MCF 10A (cell line): ENCODE measurements at regions of chr5 and their contacts with region 1.

Region 1: GRCh38 chr5:175534070-175534932 is 55.9 kb downstream of the SFXN1 start:
- DNase-seq: peak; percentile 83
- H3K4me3 Mint-ChIP-seq: no peak overlapping the region
- H3K27ac Mint-ChIP-seq: no peak overlapping the region
- H3K4me1 Mint-ChIP-seq: no peaks in the 10 kb centered on the region
- H3K27me3 Mint-ChIP-seq: no peaks in the 10 kb centered on the region
- CTCF ChIP-seq: peak; percentile 100

Region 2: DNA sequence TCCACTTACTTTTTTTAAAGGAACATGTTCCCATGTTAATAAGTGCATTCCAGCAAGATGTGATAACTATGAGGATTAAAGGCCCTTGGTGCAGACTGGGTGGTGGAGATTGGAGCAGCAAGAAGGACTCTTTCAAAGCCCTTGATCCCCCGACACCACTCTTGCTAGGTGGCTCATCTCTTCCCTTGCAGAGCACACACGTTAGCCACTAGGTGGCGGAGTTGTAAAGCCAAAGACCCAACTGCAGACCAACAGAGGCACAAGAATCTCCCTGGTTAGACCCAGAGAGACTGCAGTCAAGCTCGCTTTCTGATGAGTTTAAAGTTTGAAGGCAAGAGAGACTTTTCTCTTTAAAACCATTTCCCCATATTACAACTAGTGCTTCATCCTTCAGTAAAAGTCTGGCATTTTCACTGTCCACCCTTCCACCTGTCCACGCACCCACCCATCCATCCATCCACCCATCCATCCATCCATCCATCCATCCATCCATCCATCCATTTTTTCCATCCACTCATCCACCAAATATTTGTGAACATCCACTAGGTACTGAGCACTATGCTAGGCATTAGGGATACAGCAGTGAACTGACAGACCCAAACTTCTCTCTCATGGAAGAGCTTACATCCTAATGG is 583.0 kb before region 1 on chr5:
- CTCF ChIA-PET with region 1: interaction called, 4 read pairs
- POLR2A ChIA-PET with region 1: no interaction called
- intact Hi-C with region 1: loop called (anchors 2 kb)
- DNase-seq: peak; percentile 89
- H3K4me3 Mint-ChIP-seq: no peak overlapping the region
- H3K27ac Mint-ChIP-seq: no peak overlapping the region
- H3K4me1 Mint-ChIP-seq: no peaks in the 10 kb centered on the region
- H3K27me3 Mint-ChIP-seq: peaks cover 54% of the 10 kb centered on the region
- CTCF ChIP-seq: peak; percentile 93

Region 3: DNA sequence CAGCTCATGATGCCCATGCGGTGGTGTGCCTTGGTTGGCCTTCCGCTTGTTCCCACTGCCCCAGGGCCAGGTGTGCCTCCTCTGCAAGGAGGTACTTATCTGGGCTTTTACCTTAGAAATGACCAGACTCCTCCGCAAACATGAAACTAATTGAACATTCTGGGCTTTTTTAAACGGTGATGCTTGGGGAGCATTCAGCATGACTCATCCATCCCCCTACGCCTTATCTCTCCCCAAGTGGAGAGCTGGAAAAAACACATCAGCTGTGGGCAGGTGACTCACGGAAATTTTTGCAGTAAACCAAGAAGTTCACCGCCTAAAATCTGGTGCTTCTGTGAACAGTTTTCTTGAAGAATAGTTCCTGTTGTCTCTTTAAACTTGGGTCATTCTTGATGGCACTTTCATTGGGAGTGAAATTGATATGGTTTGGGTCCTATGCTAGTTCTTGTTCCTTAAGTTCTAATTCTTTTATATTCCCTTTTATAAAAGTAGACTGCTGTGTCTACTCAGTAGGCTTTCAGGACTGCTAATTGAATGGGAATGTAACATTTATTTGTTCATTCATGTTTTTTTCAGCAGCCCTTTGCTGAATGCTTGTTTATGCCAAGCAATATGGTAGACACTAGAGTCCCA is 16.4 kb before region 1 on chr5:
- CTCF ChIA-PET with region 1: interaction called, 24 read pairs
- POLR2A ChIA-PET with region 1: no interaction called
- intact Hi-C with region 1: no loop called
- DNase-seq: peak; percentile 45
- H3K4me3 Mint-ChIP-seq: no peak overlapping the region
- H3K27ac Mint-ChIP-seq: no peak overlapping the region
- H3K4me1 Mint-ChIP-seq: no peaks in the 10 kb centered on the region
- H3K27me3 Mint-ChIP-seq: no peaks in the 10 kb centered on the region
- CTCF ChIP-seq: no peak

Region 4: GRCh38 chr5:175556777-175557176 is 22.5 kb after region 1 on chr5:
- CTCF ChIA-PET with region 1: interaction called, 12 read pairs
- POLR2A ChIA-PET with region 1: no interaction called
- intact Hi-C with region 1: no loop called
- DNase-seq: no peak
- H3K4me3 Mint-ChIP-seq: no peak overlapping the region
- H3K27ac Mint-ChIP-seq: no peak overlapping the region
- H3K4me1 Mint-ChIP-seq: no peaks in the 10 kb centered on the region
- H3K27me3 Mint-ChIP-seq: peaks cover 42% of the 10 kb centered on the region
- CTCF ChIP-seq: no peak

Region 5: DNA sequence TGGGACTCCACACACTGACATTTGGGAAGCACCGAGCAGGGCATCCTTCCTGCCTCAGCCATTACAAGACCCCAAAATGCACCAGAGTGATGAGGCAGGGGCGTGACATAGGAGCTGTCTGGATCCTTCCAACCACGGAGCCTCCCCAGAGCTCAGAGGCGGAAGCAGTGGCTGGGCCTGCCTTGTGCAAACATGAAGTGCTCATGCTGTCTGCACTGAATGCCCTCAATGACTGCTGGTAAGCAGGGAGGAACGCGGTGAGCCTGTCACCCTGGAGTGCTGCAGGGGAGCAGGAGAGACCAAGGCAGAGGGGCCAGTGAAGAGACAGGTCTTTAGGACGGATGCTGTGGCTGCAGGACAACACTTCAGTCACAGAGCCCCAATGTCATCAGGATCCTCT is 63.4 kb after region 1 on chr5:
- CTCF ChIA-PET with region 1: interaction called, 10 read pairs
- POLR2A ChIA-PET with region 1: no interaction called
- intact Hi-C with region 1: no loop called
- DNase-seq: no peak
- H3K4me3 Mint-ChIP-seq: no peak overlapping the region
- H3K27ac Mint-ChIP-seq: no peak overlapping the region
- H3K4me1 Mint-ChIP-seq: no peaks in the 10 kb centered on the region
- H3K27me3 Mint-ChIP-seq: peaks cover 12% of the 10 kb centered on the region
- CTCF ChIP-seq: no peak

Region 6: DNA sequence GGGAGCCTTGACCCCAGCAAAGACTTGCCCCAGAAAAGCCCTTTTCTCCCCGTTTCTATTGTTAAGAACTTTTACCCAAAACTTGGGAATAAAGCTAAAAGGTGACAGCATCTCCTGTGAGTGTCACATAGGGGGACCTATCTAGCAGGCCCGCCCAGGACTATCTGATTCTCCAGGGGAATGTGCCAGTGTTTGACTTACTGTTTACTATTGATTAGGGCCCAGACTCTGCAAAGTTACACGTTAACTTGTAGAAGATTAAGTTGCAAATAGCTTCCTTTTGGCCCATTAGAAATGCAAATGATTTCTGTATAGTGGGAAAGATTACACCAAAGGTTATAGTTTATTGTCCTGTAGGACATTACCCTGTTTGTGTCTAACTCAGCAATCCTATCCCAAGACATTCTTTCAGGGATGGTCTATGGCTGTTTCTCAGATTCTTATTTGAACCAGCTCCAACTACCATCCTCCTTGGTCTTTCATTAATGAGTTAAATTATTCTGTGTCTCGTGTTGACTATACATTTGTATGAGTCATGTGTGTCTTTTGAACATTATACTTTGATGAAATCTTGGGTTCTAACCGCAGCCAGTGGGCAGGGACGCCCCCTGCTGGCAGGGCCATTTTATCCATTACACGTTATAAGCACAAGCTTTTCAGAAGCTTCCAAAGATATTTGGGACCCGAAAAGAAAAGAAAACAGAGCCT is 184.3 kb after region 1 on chr5:
- CTCF ChIA-PET with region 1: interaction called, 91 read pairs
- POLR2A ChIA-PET with region 1: interaction called, 3 read pairs
- intact Hi-C with region 1: loop called (anchors 2 kb)
- DNase-seq: peak; percentile 55
- H3K4me3 Mint-ChIP-seq: no peak overlapping the region
- H3K27ac Mint-ChIP-seq: no peak overlapping the region
- H3K4me1 Mint-ChIP-seq: no peaks in the 10 kb centered on the region
- H3K27me3 Mint-ChIP-seq: peaks cover 38% of the 10 kb centered on the region
- CTCF ChIP-seq: peak; percentile 72